Activated T-helper 1 cell treated with anti-CD3 and anti-CD28 coated beads, Interleukin-12 subunit alpha, Interleukin-12 subunit beta, Interleukin-2, Interleukin-4 antibody, amounts not matched to agents 30 ng/mL and 10 ng/mL and 1 ng/mL, durations not matched to agents 14 hours and 24 hours and 36 hours (primary cell): ENCODE measurements at regions of chr7 and their contacts with region 1.

Region 1: GRCh38 chr7:129343099-129343700 is 91.0 kb upstream of the STRIP2 start:
- DNase-seq: no peak
- H3K4me3 Mint-ChIP-seq: no peak overlapping the region
- H3K27ac Mint-ChIP-seq: no peak overlapping the region
- H3K4me1 Mint-ChIP-seq: peaks cover 42% of the 10 kb centered on the region
- H3K27me3 Mint-ChIP-seq: no peaks in the 10 kb centered on the region

Region 2: DNA sequence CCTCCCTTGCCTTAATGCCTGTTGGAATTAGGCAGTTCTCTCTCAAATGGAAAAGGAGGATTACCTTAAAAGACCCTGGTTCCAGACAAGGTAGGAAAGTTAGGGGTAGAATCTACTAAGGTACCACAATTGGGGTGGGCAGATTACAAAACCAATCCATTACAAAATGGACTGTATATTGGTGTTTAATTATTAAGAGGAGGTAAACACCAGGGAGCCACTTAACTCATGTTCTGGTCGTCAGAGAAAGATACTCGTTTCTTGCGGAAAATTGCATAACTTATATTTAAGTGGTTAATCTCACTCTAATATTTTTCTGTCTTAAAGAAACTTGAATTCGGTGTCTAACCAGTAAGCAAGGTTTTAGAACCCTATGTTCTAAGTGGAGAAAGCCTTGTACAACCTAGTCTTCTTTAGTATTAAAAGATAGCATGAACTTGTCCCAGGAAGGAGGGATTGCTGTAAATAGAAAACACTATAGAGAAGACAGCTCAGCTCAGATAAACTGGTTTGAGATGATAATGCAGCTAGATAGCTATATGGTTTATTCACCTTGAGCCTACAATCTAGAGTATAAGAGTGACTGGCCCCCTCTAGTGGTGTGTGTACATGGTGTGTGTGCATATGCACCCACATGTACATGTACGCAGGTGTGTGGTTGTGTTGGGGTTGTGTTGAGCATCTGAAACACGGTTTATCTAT is 33.0 kb after region 1 on chr7:
- intact Hi-C with region 1: loop called (anchors 2 kb)
- DNase-seq: peak; percentile 43
- H3K4me3 Mint-ChIP-seq: peak overlapping the region; percentile 35
- H3K27ac Mint-ChIP-seq: no peak overlapping the region
- H3K4me1 Mint-ChIP-seq: peaks cover 54% of the 10 kb centered on the region
- H3K27me3 Mint-ChIP-seq: no peaks in the 10 kb centered on the region

Region 3: GRCh38 chr7:129468087-129468486 is 124.9 kb after region 1 on chr7:
- intact Hi-C with region 1: loop called (anchors 1 kb)
- DNase-seq: no peak
- H3K4me3 Mint-ChIP-seq: no peak overlapping the region
- H3K27ac Mint-ChIP-seq: no peak overlapping the region
- H3K4me1 Mint-ChIP-seq: peaks cover 31% of the 10 kb centered on the region
- H3K27me3 Mint-ChIP-seq: no peaks in the 10 kb centered on the region

Region 4: GRCh38 chr7:129502376-129502776 is 159.2 kb after region 1 on chr7 and contains the start of gene SMKR1:
- intact Hi-C with region 1: loop called (anchors 1 kb)
- DNase-seq: peak; percentile 90
- H3K4me3 Mint-ChIP-seq: peak within 1 kb of the TSS; percentile 82
- H3K27ac Mint-ChIP-seq: peak within 1 kb of the TSS; percentile 86
- H3K4me1 Mint-ChIP-seq: peaks cover 19% of the 10 kb centered on the region
- H3K27me3 Mint-ChIP-seq: peaks cover 16% of the 10 kb centered on the region
- total RNA-seq, gene SMKR1: 4.8 and 5.7 TPM in 2 replicates

Region 5: GRCh38 chr7:129635300-129636029 is 292.3 kb after region 1 on chr7:
- intact Hi-C with region 1: loop called (anchors 1 kb)
- DNase-seq: peak; percentile 51
- H3K4me3 Mint-ChIP-seq: no peak overlapping the region
- H3K27ac Mint-ChIP-seq: no peak overlapping the region
- H3K4me1 Mint-ChIP-seq: peaks cover 23% of the 10 kb centered on the region
- H3K27me3 Mint-ChIP-seq: no peaks in the 10 kb centered on the region

Region 6: DNA sequence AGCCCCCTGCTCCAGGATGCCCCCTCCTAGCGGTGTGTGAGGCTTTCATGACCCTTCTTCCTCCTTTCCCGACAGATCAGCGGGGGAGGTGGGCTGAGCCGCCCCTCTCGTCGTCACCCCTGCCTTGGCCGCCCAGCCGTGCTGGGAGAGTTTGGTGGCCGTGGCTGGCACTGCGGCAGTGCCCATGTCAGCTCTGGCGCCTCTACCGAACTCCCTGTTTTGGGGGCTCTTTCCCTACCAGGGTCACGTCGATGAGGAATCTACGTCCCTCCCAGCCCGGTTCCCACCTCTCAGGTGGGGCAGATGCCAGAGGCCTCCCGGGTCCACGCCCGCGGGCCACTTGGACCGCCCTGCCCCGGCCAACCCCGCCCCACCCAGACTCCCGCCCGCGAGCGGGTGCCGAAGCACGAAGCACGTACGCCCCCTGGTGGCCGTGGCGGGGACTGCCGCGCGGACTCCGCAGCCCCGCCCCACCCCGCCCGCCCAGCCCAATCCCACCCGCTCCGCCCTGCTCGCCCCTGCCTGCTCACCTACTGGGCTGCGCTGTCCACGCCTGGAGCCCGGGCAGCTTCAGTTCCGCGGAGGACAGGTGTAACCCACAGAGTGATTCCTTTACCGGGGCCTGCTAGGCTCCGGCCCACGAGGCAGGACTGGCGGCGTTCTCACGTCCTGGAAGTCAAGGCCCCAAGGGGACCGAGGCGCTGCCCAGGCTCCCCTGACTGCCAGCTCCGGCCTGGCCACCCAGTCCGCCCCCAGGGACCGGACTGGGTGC is 482.5 kb after region 1 on chr7:
- intact Hi-C with region 1: loop called (anchors 1 kb)
- DNase-seq: peak; percentile 83
- H3K4me3 Mint-ChIP-seq: peak overlapping the region; percentile 89
- H3K27ac Mint-ChIP-seq: peak overlapping the region; percentile 67
- H3K4me1 Mint-ChIP-seq: peaks cover 14% of the 10 kb centered on the region
- H3K27me3 Mint-ChIP-seq: no peaks in the 10 kb centered on the region